ENCODE measurements at regions of chr2 and their contacts with region 1.

Region 1: DNA sequence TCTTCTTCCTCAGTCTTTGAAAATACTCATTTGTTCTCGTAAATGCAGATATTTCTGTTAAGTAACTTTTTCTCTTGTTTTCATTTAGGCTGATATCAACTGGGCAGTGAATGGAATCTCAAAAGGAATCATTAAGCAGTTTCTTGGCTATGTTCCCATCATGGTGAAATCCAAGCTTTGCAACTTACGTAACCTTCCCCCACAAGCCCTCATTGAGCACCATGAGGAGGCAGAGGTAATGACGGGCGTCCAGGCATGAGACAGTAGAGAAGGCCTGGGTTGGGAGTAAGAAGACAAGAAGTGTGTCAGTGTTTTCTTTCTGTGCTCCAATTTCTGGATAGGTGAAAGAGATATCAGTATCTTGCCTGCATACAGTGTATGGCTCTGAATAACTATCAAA is 5.1 kb downstream of the POLR1B start:
- DNase-seq: no peak
- H3K4me3 ChIP-seq: no peak overlapping the region
- H3K27ac ChIP-seq: no peak overlapping the region
- H3K4me1 ChIP-seq: peaks cover 17% of the 10 kb centered on the region
- H3K27me3 ChIP-seq: no peaks in the 10 kb centered on the region
- CTCF ChIP-seq: no peak
- POLR2A ChIP-seq: no peak

Region 2: GRCh38 chr2:111919794-111920608 is 627.3 kb before region 1 on chr2:
- intact Hi-C with region 1: no loop called
- DNase-seq: no peak
- H3K4me3 ChIP-seq: no peak overlapping the region
- H3K27ac ChIP-seq: no peak overlapping the region
- H3K4me1 ChIP-seq: peaks cover 10% of the 10 kb centered on the region
- H3K27me3 ChIP-seq: no peaks in the 10 kb centered on the region
- CTCF ChIP-seq: no peak
- POLR2A ChIP-seq: no peak

Region 3: GRCh38 chr2:112465382-112465781 is 82.0 kb before region 1 on chr2:
- intact Hi-C with region 1: no loop called
- DNase-seq: no peak
- H3K4me3 ChIP-seq: no peak overlapping the region
- H3K27ac ChIP-seq: no peak overlapping the region
- H3K4me1 ChIP-seq: no peaks in the 10 kb centered on the region
- H3K27me3 ChIP-seq: no peaks in the 10 kb centered on the region
- CTCF ChIP-seq: no peak
- POLR2A ChIP-seq: no peak

Region 4: GRCh38 chr2:112601751-112602150 is 54.4 kb after region 1 on chr2:
- intact Hi-C with region 1: no loop called
- DNase-seq: no peak
- H3K4me3 ChIP-seq: no peak overlapping the region
- H3K27ac ChIP-seq: no peak overlapping the region
- H3K4me1 ChIP-seq: peaks cover 9% of the 10 kb centered on the region
- H3K27me3 ChIP-seq: no peaks in the 10 kb centered on the region
- CTCF ChIP-seq: no peak
- POLR2A ChIP-seq: no peak

Region 5: GRCh38 chr2:112634153-112634873 is 87.0 kb after region 1 on chr2:
- intact Hi-C with region 1: loop called (anchors 5 kb)
- DNase-seq: no peak
- H3K4me3 ChIP-seq: no peak overlapping the region
- H3K27ac ChIP-seq: no peak overlapping the region
- H3K4me1 ChIP-seq: no peaks in the 10 kb centered on the region
- H3K27me3 ChIP-seq: no peaks in the 10 kb centered on the region
- CTCF ChIP-seq: no peak
- POLR2A ChIP-seq: no peak

Measured in vagina (tissue), 2 donors.